Heart left ventricle (tissue), 16 donors: ENCODE measurements at regions of chr12 and their contacts with region 1.

Region 1: DNA sequence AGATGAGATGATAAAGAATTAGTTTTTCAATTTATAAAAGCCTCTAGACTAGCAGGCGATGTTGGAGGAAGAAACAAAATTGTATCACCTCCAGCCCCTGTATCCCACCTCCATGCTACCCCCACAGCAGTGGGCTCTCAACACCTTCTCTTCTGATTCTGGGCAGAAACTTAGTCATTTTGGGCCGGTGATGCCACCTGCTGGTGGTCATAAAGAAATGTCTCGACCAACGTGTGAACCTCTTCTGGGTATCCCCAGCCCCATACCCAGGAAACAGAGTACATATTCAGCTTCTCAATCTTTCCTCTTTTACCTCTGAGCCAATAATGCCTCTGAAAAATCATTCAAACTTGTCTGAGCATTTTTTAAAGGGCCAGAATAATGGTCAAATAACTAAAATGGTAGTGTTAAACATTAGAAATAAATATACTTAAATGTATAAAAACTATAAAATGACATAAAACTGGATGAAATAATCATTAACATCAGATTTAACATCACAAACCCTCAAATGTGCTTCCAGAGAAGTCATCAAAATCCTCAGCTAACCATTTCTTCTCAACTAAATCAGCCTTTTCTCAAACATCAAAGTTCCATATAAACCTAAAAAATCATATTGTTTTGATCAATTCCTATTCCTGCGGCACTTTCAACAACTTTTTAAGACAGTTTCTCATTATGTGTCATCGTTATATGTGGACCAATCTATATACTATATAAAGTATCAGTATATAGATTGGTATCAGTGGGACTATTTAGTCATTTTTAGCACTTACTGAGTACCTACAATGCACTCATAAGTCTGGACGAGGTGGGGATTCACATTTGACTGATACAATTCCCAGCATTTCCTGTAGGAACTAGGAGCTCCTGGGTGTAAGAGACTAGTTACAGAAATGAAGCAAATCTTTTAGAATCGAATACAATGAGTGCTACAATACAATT is 69.4 kb downstream of the ATXN2 start:
- DNase-seq: peak in 2 of 5 donors; percentile 20 to 36
- ATAC-seq: peak in 3 of 4 donors; percentile 54 to 56 (median 55)
- H3K4me3 ChIP-seq: no peak overlapping the region
- H3K27ac ChIP-seq: no peak overlapping the region
- H3K4me1 ChIP-seq: no peaks in the 10 kb centered on the region
- H3K27me3 ChIP-seq: no peaks in the 10 kb centered on the region
- CTCF ChIP-seq: peak; percentile 47 to 77 (median 68)
- POLR2A ChIP-seq: no peak

Region 2: DNA sequence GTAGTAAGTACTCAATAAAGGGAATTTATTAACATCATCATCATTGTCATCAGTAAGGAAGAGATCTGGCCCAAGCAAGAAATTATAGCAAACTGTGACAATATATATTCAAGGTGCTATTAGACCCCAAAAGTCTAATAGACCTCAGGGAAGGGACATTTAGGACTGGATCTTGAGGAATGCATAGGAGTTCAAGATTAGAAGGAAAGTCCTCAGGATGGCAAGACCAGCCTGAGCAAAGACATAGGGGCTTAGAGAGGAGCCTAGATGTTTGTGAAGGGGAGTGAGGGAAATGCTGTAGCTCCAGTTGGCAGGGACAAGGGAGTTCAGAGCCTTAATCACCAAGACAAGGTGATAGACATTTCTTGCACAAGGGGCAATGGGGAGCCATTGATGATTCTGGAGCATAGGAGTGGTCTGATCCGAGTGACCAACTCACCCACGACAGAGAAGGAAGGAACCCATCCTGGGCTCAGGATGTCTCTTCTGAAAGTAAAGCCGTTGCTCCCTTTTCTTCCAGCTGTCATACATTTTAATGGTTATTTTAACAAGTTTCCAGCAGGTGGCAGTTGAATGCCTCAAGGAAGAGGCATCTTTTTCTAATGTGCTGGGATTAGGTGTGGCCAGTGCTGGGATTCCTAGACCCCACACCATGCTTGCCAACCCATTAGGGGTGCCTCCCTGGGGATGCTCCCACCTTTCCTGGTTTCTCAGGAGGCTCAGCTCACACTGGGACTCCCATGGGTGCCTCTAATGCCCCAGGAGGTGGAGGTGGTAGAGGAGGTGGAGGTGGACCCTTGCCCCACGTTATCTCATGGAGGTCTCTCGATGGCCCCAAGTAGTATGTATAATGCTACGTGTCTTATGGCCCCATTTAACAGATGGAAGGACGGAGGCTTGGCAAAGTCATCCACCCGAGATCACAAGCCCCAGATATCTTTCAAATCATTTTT is 198.6 kb before region 1 on chr12:
- intact Hi-C with region 1: loop called in 2 of 10 experiments (anchors 2 to 5 kb)
- DNase-seq: no peak
- ATAC-seq: peak in 3 of 4 donors; percentile 35 to 45 (median 39)
- H3K4me3 ChIP-seq: no peak overlapping the region
- H3K27ac ChIP-seq: no peak overlapping the region
- H3K4me1 ChIP-seq: no peaks in the 10 kb centered on the region
- H3K27me3 ChIP-seq: peaks cover 0 to 7% (median 0%) of the 10 kb centered on the region in 9 donors
- CTCF ChIP-seq: peak; percentile 26 to 61 (median 40)
- POLR2A ChIP-seq: no peak

Region 3: DNA sequence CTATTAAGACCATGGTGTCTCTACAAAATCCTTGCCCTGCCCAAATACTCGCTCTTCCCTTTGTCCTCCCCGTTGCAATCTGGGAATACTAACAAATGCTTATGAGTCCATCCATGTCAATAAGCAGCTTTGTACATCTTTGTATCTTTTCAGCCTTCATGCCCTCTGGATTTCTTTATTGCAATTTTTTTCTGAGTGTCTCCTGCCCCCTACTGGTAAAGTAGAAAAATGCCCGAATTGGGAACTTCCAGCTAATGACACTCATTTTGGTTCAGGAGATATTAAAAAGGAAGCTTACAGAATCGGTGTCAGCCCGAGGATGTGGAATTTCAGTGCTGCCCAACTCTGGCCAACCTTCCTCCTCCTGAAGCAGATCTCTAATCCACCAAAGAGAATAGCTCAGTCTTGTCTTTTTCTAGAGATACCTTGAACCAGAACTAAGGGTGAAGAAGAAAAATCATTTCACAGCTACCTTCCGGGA is 78.0 kb before region 1 on chr12:
- intact Hi-C with region 1: loop called in 1 of 10 experiments (anchors 5 kb)
- DNase-seq: no peak
- ATAC-seq: peak in 1 of 4 donors; percentile 2
- H3K4me3 ChIP-seq: no peak overlapping the region
- H3K27ac ChIP-seq: peak overlapping the region in 8 of 12 donors; percentile 45 to 89 (median 76)
- H3K4me1 ChIP-seq: peaks cover 10 to 77% (median 58%) of the 10 kb centered on the region in 12 donors
- H3K27me3 ChIP-seq: no peaks in the 10 kb centered on the region
- CTCF ChIP-seq: peak; percentile 72 to 88 (median 80)
- POLR2A ChIP-seq: no peak

Region 4: DNA sequence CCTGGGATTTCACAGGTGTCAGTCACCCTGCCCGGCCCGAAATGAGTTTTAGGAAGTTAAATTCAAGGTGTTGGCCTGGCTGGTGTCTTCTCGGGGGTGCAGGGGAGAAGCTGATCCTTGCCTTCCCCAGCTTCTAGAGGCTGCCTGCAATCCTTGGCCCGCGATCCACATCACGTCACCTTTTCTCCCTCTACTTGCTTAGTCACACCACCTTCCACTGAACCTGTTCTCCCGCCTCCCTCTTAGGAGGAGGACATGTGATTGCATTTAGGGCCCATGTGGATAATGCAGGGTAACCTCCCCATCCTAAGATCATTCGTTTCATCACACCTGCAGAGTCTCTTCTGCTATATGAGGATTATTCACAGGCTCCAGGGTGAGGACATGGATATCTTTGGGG is 94.8 kb after region 1 on chr12:
- intact Hi-C with region 1: no loop called
- DNase-seq: no peak
- ATAC-seq: no peak
- H3K4me3 ChIP-seq: no peak overlapping the region
- H3K27ac ChIP-seq: no peak overlapping the region
- H3K4me1 ChIP-seq: no peaks in the 10 kb centered on the region
- H3K27me3 ChIP-seq: no peaks in the 10 kb centered on the region
- CTCF ChIP-seq: no peak
- POLR2A ChIP-seq: no peak

Region 5: GRCh38 chr12:111643427-111643826 is 113.7 kb after region 1 on chr12:
- intact Hi-C with region 1: no loop called
- DNase-seq: peak in 2 of 5 donors; percentile 24 to 46
- ATAC-seq: peak; percentile 48 to 86 (median 84)
- H3K4me3 ChIP-seq: no peak overlapping the region
- H3K27ac ChIP-seq: peak overlapping the region in 11 of 12 donors; percentile 7 to 75 (median 43)
- H3K4me1 ChIP-seq: peaks cover 0 to 19% (median 7%) of the 10 kb centered on the region in 12 donors
- H3K27me3 ChIP-seq: no peaks in the 10 kb centered on the region
- CTCF ChIP-seq: no peak
- POLR2A ChIP-seq: no peak

Region 6: DNA sequence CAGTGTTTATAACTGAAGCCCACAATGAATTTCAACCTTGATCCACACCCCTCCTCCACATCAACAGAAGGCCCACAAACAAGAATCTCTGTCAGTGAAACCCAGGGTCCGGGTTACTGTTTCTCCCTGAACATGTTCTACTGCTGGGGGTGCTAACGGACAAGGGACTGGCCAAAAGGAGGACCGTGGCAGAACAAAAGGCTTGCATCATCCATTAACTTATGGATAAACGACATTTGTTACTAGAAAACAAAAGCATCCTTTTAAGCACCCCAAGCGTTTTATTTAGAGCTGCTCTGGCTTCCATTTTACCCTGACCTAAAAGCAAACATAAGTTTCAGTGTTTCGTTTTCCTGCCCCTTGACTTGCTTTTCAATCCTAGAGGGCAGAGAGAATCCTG is 123.9 kb after region 1 on chr12:
- intact Hi-C with region 1: no loop called
- DNase-seq: no peak
- ATAC-seq: no peak
- H3K4me3 ChIP-seq: no peak overlapping the region
- H3K27ac ChIP-seq: no peak overlapping the region
- H3K4me1 ChIP-seq: no peaks in the 10 kb centered on the region
- H3K27me3 ChIP-seq: no peaks in the 10 kb centered on the region
- CTCF ChIP-seq: no peak
- POLR2A ChIP-seq: no peak

Region 7: GRCh38 chr12:111673503-111673902 is 143.8 kb after region 1 on chr12:
- intact Hi-C with region 1: loop called in 1 of 10 experiments (anchors 10 kb)
- DNase-seq: no peak
- ATAC-seq: no peak
- H3K4me3 ChIP-seq: no peak overlapping the region
- H3K27ac ChIP-seq: peak overlapping the region in 1 of 12 donors; percentile 24
- H3K4me1 ChIP-seq: no peaks in the 10 kb centered on the region
- H3K27me3 ChIP-seq: no peaks in the 10 kb centered on the region
- CTCF ChIP-seq: peak in 11 of 12 donors; percentile 14 to 63 (median 42)
- POLR2A ChIP-seq: no peak